Left lung (tissue), 14 donors: ENCODE measurements at regions of chr11 and their contacts with region 1.

Region 1: DNA sequence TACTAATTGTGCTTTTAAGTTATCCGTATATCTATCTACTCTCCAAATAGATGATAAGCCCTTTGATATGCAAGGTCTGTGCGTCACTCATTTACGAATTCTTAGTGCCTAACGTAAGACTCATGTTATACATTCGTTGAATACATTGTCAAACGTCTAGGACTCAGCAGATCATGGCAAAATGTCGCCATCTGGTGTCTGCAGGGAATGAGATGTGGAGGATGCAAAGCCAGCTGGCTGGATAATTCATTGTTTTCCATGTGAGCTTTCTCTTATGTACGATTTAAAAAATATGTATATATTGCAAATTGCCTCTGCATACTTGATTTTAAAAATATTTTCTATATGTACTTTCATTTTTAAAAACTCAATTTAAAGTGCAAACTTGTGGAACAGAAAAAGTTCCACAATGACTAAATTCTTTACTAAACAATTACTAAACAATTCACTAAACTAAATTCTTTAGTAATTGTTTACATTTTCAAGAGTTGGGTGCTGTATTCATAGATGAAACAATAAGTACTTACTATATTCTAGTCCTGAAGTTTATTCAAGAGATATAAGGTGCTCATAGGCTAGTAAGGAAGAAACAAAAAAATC is 33.8 kb downstream of the ZNF202 start:
- DNase-seq: peak in 3 of 4 donors; percentile 34 to 70 (median 45)
- ATAC-seq: peak; percentile 76
- H3K4me3 ChIP-seq: no peak overlapping the region
- H3K27ac ChIP-seq: no peak overlapping the region
- H3K4me1 ChIP-seq: no peaks in the 10 kb centered on the region
- H3K27me3 ChIP-seq: peaks cover 3 to 21% of the 10 kb centered on the region in 2 donors
- CTCF ChIP-seq: peak; percentile 49 to 57

Region 2: GRCh38 chr11:123580557-123581275 is 127.0 kb before region 1 on chr11:
- intact Hi-C with region 1: loop called in 1 of 2 experiments (anchors 10 kb)
- DNase-seq: peak in 3 of 4 donors; percentile 62 to 93 (median 69)
- ATAC-seq: peak; percentile 96
- H3K4me3 ChIP-seq: no peak overlapping the region
- H3K27ac ChIP-seq: no peak overlapping the region
- H3K4me1 ChIP-seq: peaks cover 0 to 7% of the 10 kb centered on the region in 2 donors
- H3K27me3 ChIP-seq: peaks cover 0 to 19% of the 10 kb centered on the region in 2 donors
- CTCF ChIP-seq: peak; percentile 90 to 96

Region 3: DNA sequence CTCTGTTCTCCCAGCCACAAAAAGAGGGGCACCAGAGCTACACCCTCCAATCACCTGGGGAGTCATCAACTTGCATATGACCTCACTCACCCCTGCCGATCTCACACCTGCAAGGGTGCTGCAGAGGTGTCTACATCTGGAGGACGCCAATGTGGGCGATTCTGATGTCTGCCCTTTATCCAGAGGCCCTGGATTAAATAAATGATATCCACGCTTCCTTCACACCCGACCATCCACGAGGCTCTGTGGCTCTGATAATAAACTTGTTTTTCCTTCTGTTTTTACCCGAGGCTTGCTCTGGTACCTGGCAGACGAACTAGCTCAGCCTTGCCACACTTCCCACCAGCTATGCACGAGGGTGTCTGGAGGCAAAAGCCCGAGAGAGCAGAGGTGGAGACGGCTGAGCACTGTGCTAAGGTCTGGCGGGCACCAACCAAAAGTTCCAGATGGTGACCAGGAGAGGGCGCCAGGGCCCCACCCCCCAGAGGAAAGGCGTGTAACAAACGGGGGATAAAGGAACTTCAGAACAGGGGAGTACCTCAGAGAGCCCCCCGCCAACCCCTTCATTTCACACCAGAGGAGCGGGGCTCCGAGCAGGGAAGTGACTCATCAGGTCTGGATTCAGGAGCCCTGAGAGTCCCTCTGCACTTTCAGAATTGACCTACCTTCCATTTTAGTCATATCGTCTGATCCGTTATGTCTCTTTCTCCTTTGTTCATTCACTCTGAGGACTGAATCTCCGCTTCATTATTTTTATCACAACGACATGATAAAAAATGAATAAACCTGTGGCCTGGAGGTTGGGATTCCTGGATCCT is 66.8 kb before region 1 on chr11:
- intact Hi-C with region 1: loop called in 1 of 2 experiments (anchors 5 kb)
- DNase-seq: peak in 1 of 4 donors; percentile 25
- ATAC-seq: peak; percentile 88
- H3K4me3 ChIP-seq: no peak overlapping the region
- H3K27ac ChIP-seq: no peak overlapping the region
- H3K4me1 ChIP-seq: no peaks in the 10 kb centered on the region
- H3K27me3 ChIP-seq: peaks cover 0 to 50% of the 10 kb centered on the region in 2 donors
- CTCF ChIP-seq: peak; percentile 51